ENCODE measurements at regions of chr7 and their contacts with region 1.

Region 1: DNA sequence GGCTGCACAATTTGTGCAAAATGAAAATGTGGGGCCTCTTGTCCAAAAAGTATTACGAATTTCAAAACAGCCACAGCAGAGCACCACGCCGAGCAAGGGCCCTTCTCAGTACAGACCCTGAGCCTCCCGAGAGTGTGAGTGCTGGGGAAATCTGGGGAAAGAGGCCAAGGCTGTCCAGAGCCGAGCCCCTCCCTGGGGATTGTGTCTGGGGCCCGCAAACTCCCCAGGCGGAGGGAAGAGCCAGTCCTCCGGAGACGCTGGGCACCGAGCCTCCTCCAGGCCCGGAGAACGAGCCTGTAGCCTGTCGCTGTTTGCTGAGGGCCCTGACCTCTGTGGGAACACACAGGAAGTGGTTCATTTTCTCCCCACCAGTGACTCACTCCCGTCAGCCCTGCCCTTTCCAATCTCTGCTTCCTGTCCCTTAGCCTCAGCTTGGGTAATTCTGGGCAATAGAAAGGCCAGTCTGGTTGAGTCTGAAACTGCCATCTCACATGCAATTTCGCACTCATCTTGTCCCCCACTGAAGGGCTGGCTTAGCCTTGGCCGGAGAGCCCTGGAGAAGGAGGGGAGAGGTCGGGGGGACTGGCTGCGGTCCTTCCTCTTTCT is 19.5 kb upstream of the GNA12 start:
- DNase-seq: peak; percentile 89
- H3K4me3 ChIP-seq: peak overlapping the region; percentile 25; the same call in 1 of the 2 replicates
- CTCF ChIP-seq: no peak

Region 2: DNA sequence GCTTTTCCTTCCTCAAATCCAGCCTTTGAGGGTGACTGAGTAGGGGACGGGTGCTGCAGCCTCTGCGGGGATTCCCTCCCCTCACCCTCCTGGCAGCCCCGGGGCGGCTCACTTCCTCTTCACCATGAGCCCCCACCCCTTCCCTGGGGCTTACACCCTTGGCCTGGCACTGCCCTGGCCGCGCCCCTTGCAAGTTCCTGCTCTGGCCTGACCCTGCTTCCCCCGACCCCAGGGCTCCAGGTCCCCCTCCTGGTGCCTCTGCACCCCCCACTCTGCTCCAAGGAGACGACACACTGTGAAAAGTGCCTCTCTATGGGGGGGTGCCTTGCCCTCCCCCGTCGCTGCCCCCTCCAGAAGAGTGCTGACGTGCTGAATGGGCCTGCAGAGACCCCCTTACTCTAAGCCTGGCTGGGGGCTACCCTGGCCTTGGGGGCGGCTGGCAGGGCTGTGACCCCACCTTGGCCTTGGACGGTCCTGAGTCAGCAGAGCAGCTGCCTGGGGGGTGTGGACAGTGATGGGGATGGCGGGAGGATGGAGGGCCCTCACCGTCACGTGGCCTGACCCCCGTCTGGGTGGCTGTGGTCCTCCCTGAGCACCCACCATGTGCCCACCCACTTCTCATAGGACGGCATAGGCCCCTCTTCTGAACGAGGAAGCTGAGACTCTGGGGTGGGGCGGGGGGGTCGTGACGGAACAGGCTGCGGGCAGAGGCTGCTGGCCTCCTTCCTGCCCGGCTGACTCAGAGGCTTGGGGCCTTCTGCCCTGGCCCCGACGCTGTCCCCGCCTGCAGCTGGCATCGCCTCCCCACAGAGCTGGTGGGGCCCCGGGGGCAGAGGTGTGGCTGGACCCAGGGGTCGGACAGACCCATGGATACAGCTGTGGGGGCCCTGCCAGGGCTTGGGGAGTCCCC is 334.1 kb before region 1 on chr7:
- CTCF ChIA-PET with region 1: no interaction called
- POLR2A ChIA-PET with region 1: no interaction called
- DNase-seq: no peak
- H3K4me3 ChIP-seq: no peak overlapping the region
- CTCF ChIP-seq: no peak

Region 3: DNA sequence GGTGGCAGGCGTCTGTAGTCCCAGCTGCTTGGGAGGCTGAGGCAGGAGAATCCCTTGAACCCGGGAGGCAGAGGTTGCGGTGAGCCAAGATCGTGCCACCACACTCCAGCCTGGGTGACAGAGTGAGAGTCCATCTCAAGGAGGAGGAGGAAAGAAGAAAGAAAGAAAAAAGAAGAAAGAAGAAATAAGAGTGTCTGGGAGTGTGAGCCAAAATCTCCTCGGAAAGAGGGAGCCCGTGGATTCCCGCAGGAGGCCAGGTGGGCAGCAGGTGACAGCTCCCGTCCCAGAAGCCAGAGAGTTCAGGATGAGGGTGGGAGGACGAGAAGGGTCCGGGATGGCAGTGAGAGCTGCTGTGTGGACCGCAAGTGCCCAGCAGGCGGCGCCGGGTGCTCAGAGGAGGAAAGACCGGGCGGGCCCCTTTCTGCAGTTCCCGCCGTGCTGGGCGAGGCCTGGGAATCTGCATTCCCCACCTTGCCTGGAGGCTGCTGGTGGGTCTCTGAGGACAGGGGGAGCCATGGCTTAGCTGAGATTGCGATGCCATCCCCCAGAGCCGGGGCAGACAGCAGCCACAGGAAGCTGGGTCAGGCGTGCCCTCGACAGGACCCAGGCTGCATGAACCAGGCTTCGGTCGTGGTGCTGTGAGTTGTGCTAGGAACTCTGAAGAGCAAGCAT is 192.7 kb before region 1 on chr7:
- CTCF ChIA-PET with region 1: interaction called, 17 read pairs
- POLR2A ChIA-PET with region 1: no interaction called
- DNase-seq: no peak
- H3K4me3 ChIP-seq: no peak overlapping the region
- CTCF ChIP-seq: peak; percentile 96

Region 4: GRCh38 chr7:2851497-2851896 is 12.1 kb before region 1 on chr7:
- CTCF ChIA-PET with region 1: interaction called, 24 read pairs
- POLR2A ChIA-PET with region 1: no interaction called
- DNase-seq: no peak
- H3K4me3 ChIP-seq: no peak overlapping the region
- CTCF ChIP-seq: no peak

Region 5: DNA sequence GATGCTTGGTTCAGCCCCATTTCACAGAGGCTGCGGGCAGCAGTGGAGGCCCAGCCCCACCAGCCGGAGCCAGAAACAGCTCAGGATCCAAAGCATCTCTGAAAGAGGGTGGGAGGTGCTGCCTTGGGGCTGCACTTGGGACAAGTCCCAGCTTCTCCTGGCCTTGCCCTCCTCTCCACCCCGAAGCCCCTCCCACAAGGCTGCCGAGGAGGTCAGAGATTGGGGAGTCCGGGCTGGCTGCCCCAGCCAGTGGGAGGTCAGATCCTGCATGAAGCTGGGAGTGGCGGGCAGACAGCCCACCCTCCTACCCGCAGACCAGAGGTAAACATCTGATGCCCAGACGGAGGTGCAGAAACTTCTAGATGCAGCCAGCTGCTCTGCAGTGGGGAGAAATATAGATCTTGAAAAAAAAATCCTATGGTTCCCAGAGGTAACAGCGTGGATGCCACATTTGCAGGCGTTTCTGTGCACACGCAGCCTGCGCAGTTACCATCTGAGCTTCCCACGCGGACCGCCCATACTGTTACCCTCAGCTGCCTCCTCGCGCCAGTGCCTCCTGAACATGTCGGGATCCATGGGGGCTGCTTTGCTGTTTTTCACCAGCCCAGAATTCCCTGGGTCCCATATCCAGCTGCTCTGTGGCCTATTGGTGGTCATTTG is 17.4 kb after region 1 on chr7:
- CTCF ChIA-PET with region 1: interaction called, 34 read pairs
- POLR2A ChIA-PET with region 1: no interaction called
- DNase-seq: no peak
- H3K4me3 ChIP-seq: no peak overlapping the region
- CTCF ChIP-seq: no peak

Region 6: GRCh38 chr7:4631664-4632171 is 1768.2 kb after region 1 on chr7:
- CTCF ChIA-PET with region 1: interaction called, 24 read pairs
- POLR2A ChIA-PET with region 1: no interaction called
- DNase-seq: peak; percentile 60
- H3K4me3 ChIP-seq: peak overlapping the region; percentile 53
- CTCF ChIP-seq: peak; percentile 79